Activated CD4-positive, alpha-beta memory T cell treated with anti-CD3 and anti-CD28 coated beads for 36 hours (primary cell): ENCODE measurements at regions of chrX and their contacts with region 1.

Region 1: DNA sequence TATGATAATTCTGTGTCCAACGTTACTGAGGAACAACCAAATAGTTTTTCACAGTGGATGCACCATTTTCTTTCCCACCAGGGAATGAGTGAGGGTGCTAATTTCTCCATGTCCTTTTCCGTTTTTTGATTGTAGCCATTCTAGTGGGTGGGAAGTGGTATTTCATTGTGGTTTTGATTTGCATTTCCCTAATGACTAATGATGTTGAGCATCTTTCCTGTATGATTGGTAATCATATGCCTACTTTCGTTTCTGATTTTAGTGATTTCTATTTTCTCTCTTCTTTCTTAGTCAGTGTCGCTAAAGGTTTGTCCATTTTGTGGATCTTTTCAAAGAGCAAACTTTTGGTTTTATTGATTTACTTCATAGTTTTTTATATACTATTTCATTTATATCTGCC is 32.1 kb upstream of the TEX13D start:
- DNase-seq: no peak
- H3K4me3 Mint-ChIP-seq: no peak overlapping the region
- H3K27ac Mint-ChIP-seq: peak overlapping the region; percentile 58
- H3K4me1 Mint-ChIP-seq: peaks cover 32% of the 10 kb centered on the region
- H3K27me3 Mint-ChIP-seq: no peaks in the 10 kb centered on the region

Region 2: GRCh38 chrX:124098089-124098488 is 202.3 kb before region 1 on chrX:
- CTCF ChIA-PET with region 1: no interaction called
- POLR2A ChIA-PET with region 1: no interaction called
- intact Hi-C with region 1: no loop called
- DNase-seq: no peak
- H3K4me3 Mint-ChIP-seq: no peak overlapping the region
- H3K27ac Mint-ChIP-seq: no peak overlapping the region
- H3K4me1 Mint-ChIP-seq: peaks cover 2% of the 10 kb centered on the region
- H3K27me3 Mint-ChIP-seq: no peaks in the 10 kb centered on the region

Region 3: GRCh38 chrX:124239911-124240310 is 60.5 kb before region 1 on chrX:
- CTCF ChIA-PET with region 1: no interaction called
- POLR2A ChIA-PET with region 1: no interaction called
- intact Hi-C with region 1: loop called (anchors 1 kb)
- DNase-seq: peak; percentile 61
- H3K4me3 Mint-ChIP-seq: peak overlapping the region; percentile 46
- H3K27ac Mint-ChIP-seq: peak overlapping the region; percentile 70
- H3K4me1 Mint-ChIP-seq: peaks cover 44% of the 10 kb centered on the region
- H3K27me3 Mint-ChIP-seq: no peaks in the 10 kb centered on the region

Region 4: DNA sequence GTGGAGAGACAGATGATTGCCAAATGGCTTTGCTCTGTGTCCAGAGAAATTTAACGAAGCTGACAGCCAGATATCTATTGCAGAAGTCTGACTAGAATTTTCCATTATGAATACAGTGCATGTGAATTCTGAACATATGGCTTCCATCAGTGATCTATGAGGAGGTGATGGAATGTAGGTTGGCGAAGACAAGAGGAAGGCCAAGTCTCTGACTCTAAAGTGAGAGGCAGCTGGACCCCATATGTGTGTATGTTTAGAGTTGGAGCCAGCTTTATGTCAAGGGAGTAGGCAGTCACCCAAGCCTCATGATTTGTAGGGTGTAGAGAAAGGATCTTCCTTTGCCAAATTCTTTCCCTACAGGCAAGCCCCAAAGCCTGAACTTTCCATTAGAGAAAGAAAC is 44.2 kb before region 1 on chrX:
- CTCF ChIA-PET with region 1: no interaction called
- POLR2A ChIA-PET with region 1: no interaction called
- intact Hi-C with region 1: no loop called
- DNase-seq: no peak
- H3K4me3 Mint-ChIP-seq: no peak overlapping the region
- H3K27ac Mint-ChIP-seq: no peak overlapping the region
- H3K4me1 Mint-ChIP-seq: peaks cover 26% of the 10 kb centered on the region
- H3K27me3 Mint-ChIP-seq: no peaks in the 10 kb centered on the region

Region 5: DNA sequence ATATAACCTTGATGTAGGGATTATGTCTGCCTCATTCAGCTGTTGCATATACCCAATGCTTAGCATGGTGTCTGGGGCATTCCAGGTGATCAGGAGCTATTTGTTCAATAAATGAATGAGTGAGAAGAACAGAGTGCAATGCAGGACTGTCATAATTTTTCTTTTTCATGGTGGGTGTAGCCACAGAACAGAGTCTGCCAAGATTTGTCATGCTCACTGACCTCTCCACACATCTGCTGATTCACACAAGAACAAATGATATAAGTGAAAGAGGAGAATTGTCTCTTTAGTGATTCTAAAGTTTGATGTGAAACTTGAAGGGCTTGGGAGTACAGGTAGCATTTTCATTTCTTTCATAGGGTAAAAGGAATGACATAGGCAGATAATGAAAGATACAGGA is 32.3 kb before region 1 on chrX:
- CTCF ChIA-PET with region 1: no interaction called
- POLR2A ChIA-PET with region 1: no interaction called
- intact Hi-C with region 1: no loop called
- DNase-seq: no peak
- H3K4me3 Mint-ChIP-seq: no peak overlapping the region
- H3K27ac Mint-ChIP-seq: no peak overlapping the region
- H3K4me1 Mint-ChIP-seq: peaks cover 8% of the 10 kb centered on the region
- H3K27me3 Mint-ChIP-seq: no peaks in the 10 kb centered on the region